IMR-90 (cell line): ENCODE measurements at regions of chrX and their contacts with region 1.

Region 1: GRCh38 chrX:39560271-39560670 is 537.5 kb downstream of the BCOR start:
- DNase-seq: no peak
- ATAC-seq: no peak
- H3K4me3 ChIP-seq: no peak overlapping the region
- H3K27ac ChIP-seq: no peak overlapping the region
- H3K4me1 ChIP-seq: no peaks in the 10 kb centered on the region
- H3K27me3 ChIP-seq: peaks cover 28% of the 10 kb centered on the region
- CTCF ChIP-seq: no peak
- POLR2A ChIP-seq: no peak
- RAD21 ChIP-seq: no peak

Region 2: GRCh38 chrX:39012621-39013111 is 547.6 kb before region 1 on chrX:
- CTCF ChIA-PET with region 1: no interaction called
- POLR2A ChIA-PET with region 1: no interaction called
- dilution Hi-C with region 1: no loop called
- in situ Hi-C with region 1: no loop called
- intact Hi-C with region 1: no loop called
- DNase-seq: peak; percentile 7
- ATAC-seq: no peak
- H3K4me3 ChIP-seq: no peak overlapping the region
- H3K27ac ChIP-seq: no peak overlapping the region
- H3K4me1 ChIP-seq: no peaks in the 10 kb centered on the region
- H3K27me3 ChIP-seq: peaks cover 30% of the 10 kb centered on the region
- CTCF ChIP-seq: no peak
- POLR2A ChIP-seq: no peak
- RAD21 ChIP-seq: no peak

Region 3: DNA sequence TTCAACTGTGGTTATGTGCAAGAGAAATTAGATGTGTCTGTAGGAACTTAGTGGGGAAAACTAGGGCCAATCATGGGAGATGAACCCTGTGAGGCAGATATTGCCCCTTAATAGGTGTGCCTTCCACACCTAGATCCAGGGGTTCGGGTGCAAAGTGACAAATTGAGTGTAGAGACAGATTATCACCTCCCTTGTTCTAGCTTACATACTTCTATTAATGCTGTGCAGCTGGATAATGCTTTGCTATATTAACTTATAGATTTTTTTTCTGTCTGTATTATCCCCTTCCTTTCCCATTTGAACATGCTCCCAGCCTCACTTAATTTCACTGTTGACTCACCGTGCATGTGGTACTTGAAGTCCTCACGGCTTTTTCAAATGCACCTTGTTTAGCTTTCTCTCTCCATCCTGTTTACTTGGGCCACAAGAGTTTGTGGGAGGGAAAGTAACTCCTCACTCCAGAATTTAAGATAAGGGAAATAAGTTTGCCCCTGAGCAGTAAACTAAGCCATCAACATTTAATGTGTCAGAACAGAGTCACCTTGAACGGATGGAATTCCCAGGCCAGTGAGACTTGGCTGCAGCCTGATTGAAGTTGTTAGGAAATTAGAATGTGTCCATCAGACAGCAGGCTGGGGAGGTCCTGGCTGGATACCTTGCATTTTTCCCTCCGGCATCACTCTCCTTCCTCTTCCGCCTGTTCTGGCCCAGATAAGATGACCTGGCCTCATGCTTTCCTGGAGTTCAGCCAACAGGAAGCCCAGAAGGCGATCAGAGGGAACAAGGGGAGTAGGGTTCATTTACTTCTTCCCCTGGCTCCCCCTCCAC is 59.1 kb after region 1 on chrX:
- CTCF ChIA-PET with region 1: no interaction called
- POLR2A ChIA-PET with region 1: no interaction called
- dilution Hi-C with region 1: no loop called
- in situ Hi-C with region 1: loop called (anchors 10 kb)
- intact Hi-C with region 1: no loop called
- DNase-seq: no peak
- ATAC-seq: no peak
- H3K4me3 ChIP-seq: no peak overlapping the region
- H3K27ac ChIP-seq: no peak overlapping the region
- H3K4me1 ChIP-seq: no peaks in the 10 kb centered on the region
- H3K27me3 ChIP-seq: peaks cover 12% of the 10 kb centered on the region
- CTCF ChIP-seq: no peak
- POLR2A ChIP-seq: no peak
- RAD21 ChIP-seq: no peak